Posterior vena cava (tissue), 2 donors: ENCODE measurements at regions of chr22 and their contacts with region 1.

Region 1: DNA sequence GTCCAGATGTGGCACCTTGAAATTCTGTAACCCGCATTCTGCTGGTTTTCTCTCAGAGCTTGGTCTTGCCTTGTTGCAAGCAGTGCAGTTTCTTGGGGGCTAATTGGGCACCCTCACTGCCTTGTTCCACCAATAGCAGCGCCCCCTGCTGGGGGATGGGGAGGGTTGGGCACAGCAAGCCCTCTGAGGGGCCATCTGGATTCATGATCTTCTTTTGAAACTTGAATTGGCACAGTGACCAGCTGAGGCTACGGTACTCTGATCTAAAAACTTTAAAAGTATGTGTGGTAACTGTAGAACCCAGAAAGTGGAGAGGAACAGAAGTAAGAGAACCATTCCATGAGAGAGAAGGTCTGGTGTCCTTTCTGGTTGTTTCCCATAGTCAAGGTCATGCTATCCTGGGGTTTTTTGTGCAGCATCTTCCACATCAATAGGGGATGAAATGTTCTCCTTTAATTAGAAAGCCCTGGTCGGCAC is 64.2 kb downstream of the MED15 start:
- DNase-seq: no peak

Region 2: GRCh38 chr22:21754523-21754922 is 1183.0 kb after region 1 on chr22:
- intact Hi-C with region 1: loop called in 1 of 2 experiments (anchors 10 kb)
- DNase-seq: no peak